Mucosa of descending colon (tissue), 3 donors: ENCODE measurements at regions of chr2 and their contacts with region 1.

Region 1: GRCh38 chr2:66574701-66575624 is 140.0 kb downstream of the MEIS1 start:
- DNase-seq: peak in 2 of 3 donors; percentile 38 to 52
- ATAC-seq: peak; percentile 50
- H3K4me3 ChIP-seq: no peak overlapping the region
- H3K4me1 ChIP-seq: peaks cover 12% of the 10 kb centered on the region
- CTCF ChIP-seq: no peak

Region 2: DNA sequence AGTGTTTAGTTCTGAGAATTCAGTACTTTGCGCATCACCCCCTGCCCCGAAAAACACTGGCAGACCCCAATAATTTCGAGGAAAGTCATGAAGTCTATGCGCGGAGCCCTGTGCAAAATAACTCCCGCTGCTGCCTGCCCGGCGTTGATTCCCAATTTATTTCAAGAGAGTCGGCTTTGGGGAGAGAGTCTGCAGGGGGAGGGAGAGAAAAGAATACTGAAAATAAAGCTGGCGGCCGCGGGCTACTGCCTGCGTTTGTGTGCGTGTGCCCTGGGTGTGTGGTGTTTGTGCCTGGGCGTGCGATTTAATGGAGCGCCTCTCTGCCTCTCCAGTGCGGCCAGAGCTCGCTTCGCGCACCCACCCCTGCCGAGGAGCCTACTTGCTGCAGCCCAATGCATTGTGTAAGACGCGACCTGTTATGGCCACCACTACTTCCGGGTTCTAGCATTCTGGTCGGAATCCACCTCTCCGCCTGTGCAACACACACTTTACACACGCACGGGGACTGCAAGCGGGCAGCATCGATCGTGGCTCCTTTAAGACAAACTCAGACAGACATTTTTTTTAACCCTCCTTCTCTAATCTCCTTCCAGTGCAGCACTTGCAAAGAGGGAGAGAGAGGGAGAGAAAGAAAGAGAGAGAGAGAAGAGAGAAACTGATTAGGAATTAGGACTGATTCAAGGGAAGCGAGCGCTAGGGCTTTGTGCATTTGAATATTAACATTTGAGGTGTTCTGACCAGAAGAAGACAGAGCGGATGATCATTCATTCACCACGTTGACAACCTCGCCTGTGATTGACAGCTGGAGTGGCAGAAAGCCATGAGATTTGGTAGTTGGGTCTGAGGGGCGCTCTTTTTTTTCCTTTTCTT is 140.0 kb before region 1 on chr2 and contains the start of gene MEIS1:
- intact Hi-C with region 1: loop called (anchors 5 to 10 kb)
- DNase-seq: peak; percentile 73 to 87 (median 81)
- ATAC-seq: peak; percentile 84
- H3K4me3 ChIP-seq: no peak within 1 kb of the TSS
- H3K4me1 ChIP-seq: peaks cover 23% of the 10 kb centered on the region
- CTCF ChIP-seq: no peak
- total RNA-seq, gene MEIS1: 23.2 to 196 (median 33.4) TPM

Region 3: GRCh38 chr2:66691031-66691507 is 116.1 kb after region 1 on chr2:
- intact Hi-C with region 1: loop called in 1 of 2 experiments (anchors 5 kb)
- DNase-seq: no peak
- ATAC-seq: no peak
- H3K4me3 ChIP-seq: no peak overlapping the region
- H3K4me1 ChIP-seq: no peaks in the 10 kb centered on the region
- CTCF ChIP-seq: no peak

Region 4: GRCh38 chr2:67650291-67651133 is 1075.5 kb after region 1 on chr2:
- intact Hi-C with region 1: loop called in 1 of 2 experiments (anchors 10 kb)
- DNase-seq: peak; percentile 59 to 66 (median 65)
- ATAC-seq: peak; percentile 71
- H3K4me3 ChIP-seq: no peak overlapping the region
- H3K4me1 ChIP-seq: peaks cover 3% of the 10 kb centered on the region
- CTCF ChIP-seq: no peak